PC-9 (cell line): ENCODE measurements at regions of chr22 and their contacts with region 1.

Region 1: GRCh38 chr22:22999523-22999922 is 70.8 kb upstream of the GNAZ start:
- DNase-seq: no peak
- H3K4me3 ChIP-seq: no peak overlapping the region
- H3K27ac ChIP-seq: no peak overlapping the region
- H3K4me1 ChIP-seq: no peaks in the 10 kb centered on the region
- H3K27me3 ChIP-seq: peaks cover 3% of the 10 kb centered on the region; the same call in 1 of the 2 replicates
- CTCF ChIP-seq: no peak

Region 2: GRCh38 chr22:22609291-22609690 is 390.2 kb before region 1 on chr22:
- CTCF ChIA-PET with region 1: interaction called, 16 read pairs
- POLR2A ChIA-PET with region 1: no interaction called
- intact Hi-C with region 1: no loop called
- DNase-seq: no peak
- H3K4me3 ChIP-seq: no peak overlapping the region
- H3K27ac ChIP-seq: no peak overlapping the region
- H3K4me1 ChIP-seq: no peaks in the 10 kb centered on the region
- H3K27me3 ChIP-seq: no peaks in the 10 kb centered on the region; the same call in 1 of the 2 replicates
- CTCF ChIP-seq: no peak